Ascending aorta (tissue), 2 donors: ENCODE measurements at regions of chr11 and their contacts with region 1.

Region 1: GRCh38 chr11:12673924-12674570 is at the start of gene TEAD1:
- DNase-seq: peak; percentile 65 to 98
- H3K4me3 ChIP-seq: peak within 1 kb of the TSS; percentile 85 to 97
- H3K27ac ChIP-seq: peak within 1 kb of the TSS; percentile 86 to 99
- H3K4me1 ChIP-seq: peaks cover 0 to 8% of the 10 kb centered on the region in 2 donors
- H3K27me3 ChIP-seq: no peaks in the 10 kb centered on the region
- CTCF ChIP-seq: no peak
- total RNA-seq, gene TEAD1: 112 TPM

Region 2: DNA sequence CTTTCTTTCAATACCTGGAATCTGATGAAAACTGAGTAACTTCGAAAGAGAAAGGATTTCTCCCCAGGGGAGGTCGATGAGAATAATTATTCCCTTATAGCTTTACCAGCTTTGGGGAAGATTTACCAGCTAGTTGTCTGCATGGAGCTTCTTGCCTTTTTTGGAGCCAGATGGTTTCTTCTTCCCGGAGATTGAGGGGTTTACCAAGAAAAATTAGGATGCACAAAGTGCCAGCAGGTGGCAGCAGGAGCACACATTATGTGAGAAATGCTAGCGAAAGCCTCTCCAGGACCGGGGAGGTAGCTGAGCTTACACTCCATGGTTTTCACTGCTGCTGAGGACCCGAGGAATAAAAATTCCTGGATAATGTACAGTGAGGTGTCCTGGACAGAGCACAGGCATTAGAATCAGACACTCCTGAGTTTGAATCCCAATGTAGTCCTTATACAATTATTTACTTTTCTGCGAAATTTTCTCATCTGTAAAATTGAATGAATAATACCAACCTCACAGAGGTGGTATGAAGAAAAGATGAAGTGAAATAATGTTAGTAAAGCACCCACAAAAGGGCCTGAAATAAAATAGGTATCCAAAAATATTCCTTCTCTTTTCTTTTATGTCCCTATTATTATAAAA is 342.7 kb before region 1 on chr11:
- intact Hi-C with region 1: loop called (anchors 5 kb)
- DNase-seq: peak in 1 of 2 donors; percentile 88
- H3K4me3 ChIP-seq: no peak overlapping the region
- H3K27ac ChIP-seq: no peak overlapping the region
- H3K4me1 ChIP-seq: peaks cover 0 to 3% of the 10 kb centered on the region in 2 donors
- H3K27me3 ChIP-seq: no peaks in the 10 kb centered on the region
- CTCF ChIP-seq: peak; percentile 63 to 78 (median 74)

Region 3: GRCh38 chr11:12377824-12378593 is 296.0 kb before region 1 on chr11:
- intact Hi-C with region 1: loop called (anchors 5 kb)
- DNase-seq: peak in 1 of 2 donors; percentile 91
- H3K4me3 ChIP-seq: peak overlapping the region; percentile 88
- H3K27ac ChIP-seq: peak overlapping the region; percentile 97
- H3K4me1 ChIP-seq: peaks cover 0 to 21% of the 10 kb centered on the region in 2 donors
- H3K27me3 ChIP-seq: no peaks in the 10 kb centered on the region
- CTCF ChIP-seq: peak in 2 of 3 experiments; percentile 5 to 18

Region 4: GRCh38 chr11:12411806-12412727 is 262.0 kb before region 1 on chr11:
- intact Hi-C with region 1: loop called (anchors 5 kb)
- DNase-seq: peak in 1 of 2 donors; percentile 89
- H3K4me3 ChIP-seq: no peak overlapping the region
- H3K27ac ChIP-seq: peak overlapping the region; percentile 85
- H3K4me1 ChIP-seq: peaks cover 12 to 41% of the 10 kb centered on the region in 2 donors
- H3K27me3 ChIP-seq: no peaks in the 10 kb centered on the region
- CTCF ChIP-seq: peak; percentile 69 to 75 (median 69)

Region 5: GRCh38 chr11:12693479-12694181 is 19.6 kb after region 1 on chr11:
- intact Hi-C with region 1: loop called (anchors 1 kb)
- DNase-seq: peak in 1 of 2 donors; percentile 86
- H3K4me3 ChIP-seq: peak overlapping the region; percentile 31 to 47
- H3K27ac ChIP-seq: peak overlapping the region; percentile 93 to 94
- H3K4me1 ChIP-seq: peaks cover 9 to 43% of the 10 kb centered on the region in 2 donors
- H3K27me3 ChIP-seq: no peaks in the 10 kb centered on the region
- CTCF ChIP-seq: no peak

Region 6: GRCh38 chr11:12769834-12770345 is 95.8 kb after region 1 on chr11:
- intact Hi-C with region 1: no loop called
- DNase-seq: no peak
- H3K4me3 ChIP-seq: no peak overlapping the region
- H3K27ac ChIP-seq: no peak overlapping the region
- H3K4me1 ChIP-seq: peaks cover 0 to 9% of the 10 kb centered on the region in 2 donors
- H3K27me3 ChIP-seq: no peaks in the 10 kb centered on the region
- CTCF ChIP-seq: no peak

Region 7: DNA sequence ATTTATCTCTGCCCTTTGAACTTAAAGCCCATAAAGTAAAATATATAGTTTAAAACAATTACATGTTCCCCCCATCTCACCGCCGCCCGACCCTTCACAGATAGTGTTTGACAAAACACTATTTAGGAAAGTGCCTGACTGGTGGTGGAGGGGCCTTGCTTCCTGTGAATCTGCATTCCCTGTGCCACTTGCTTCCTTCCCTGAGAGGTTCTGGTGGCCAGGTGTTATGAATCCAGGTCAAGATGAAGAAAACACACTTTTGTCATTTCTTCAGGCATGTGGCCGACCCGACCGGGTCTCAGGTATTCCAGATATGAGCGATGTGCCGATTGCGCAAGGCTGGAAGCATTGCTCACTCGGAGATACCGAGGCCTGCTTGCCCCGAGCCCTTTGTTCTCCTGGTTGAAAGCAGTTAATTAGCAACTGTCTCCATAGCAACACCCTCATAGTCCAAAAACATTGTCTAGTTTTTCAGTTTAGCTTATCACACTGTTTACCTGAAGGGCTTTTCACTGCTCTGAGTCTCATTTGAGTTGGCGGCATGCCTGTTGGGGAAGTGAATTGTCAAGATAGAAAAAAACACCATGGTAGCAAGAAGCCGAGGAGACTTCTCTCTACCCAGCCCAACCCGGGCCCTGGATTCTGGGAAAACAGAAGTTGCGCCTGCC is 128.5 kb after region 1 on chr11:
- intact Hi-C with region 1: no loop called
- DNase-seq: no peak
- H3K4me3 ChIP-seq: no peak overlapping the region
- H3K27ac ChIP-seq: peak overlapping the region in 1 of 2 donors; percentile 23
- H3K4me1 ChIP-seq: peaks cover 13 to 24% of the 10 kb centered on the region in 2 donors
- H3K27me3 ChIP-seq: no peaks in the 10 kb centered on the region
- CTCF ChIP-seq: no peak

Region 8: DNA sequence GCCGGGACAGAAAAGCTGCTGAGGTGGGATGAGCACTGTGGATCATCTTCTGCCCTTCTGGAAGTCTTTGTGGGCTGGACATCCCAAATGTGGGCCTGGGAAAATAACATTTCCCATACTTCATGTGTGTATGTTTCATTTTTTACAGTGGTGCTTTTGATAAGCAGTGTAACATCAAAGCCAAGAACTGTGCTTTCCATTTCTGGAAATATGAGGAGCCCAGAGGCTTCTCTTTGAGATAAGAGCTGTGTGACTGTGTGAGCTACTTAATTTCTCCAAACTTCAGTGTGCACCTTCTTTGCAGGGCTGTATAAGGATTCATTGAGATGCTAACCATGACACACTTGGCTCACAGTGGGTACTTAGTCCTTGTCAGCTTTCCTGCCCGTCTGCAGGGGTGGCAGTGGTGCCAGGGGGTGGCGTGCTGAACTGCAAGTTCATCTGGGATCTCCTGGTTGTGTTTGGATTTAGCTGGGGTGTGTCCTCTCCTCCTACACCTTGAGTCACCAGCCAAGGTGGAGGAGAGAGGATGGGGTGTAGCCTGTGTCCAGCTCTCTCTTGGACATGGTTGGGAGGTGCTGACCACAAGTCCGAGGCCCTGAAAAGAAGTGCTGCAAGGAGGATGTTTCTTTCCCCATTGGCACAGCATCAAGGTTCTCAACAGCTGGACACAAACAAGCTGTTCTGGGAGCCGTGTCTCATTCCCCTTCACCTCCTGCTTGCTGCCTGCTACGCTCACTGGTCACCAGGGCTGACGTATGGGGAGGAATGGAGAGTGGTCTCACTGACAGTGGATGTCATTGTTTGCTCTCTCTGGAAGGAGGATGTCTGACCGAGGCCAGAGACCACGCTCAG is 139.6 kb after region 1 on chr11:
- intact Hi-C with region 1: loop called (anchors 1 kb)
- DNase-seq: no peak
- H3K4me3 ChIP-seq: no peak overlapping the region
- H3K27ac ChIP-seq: peak overlapping the region in 1 of 2 donors; percentile 3
- H3K4me1 ChIP-seq: peaks cover 0 to 13% of the 10 kb centered on the region in 2 donors
- H3K27me3 ChIP-seq: no peaks in the 10 kb centered on the region
- CTCF ChIP-seq: no peak

Region 9: GRCh38 chr11:12888525-12889158 is 214.6 kb after region 1 on chr11:
- intact Hi-C with region 1: loop called (anchors 1 kb)
- DNase-seq: peak; percentile 53 to 94
- H3K4me3 ChIP-seq: peak overlapping the region in 1 of 2 donors; percentile 7
- H3K27ac ChIP-seq: peak overlapping the region; percentile 81 to 82
- H3K4me1 ChIP-seq: peaks cover 8 to 25% of the 10 kb centered on the region in 2 donors
- H3K27me3 ChIP-seq: no peaks in the 10 kb centered on the region
- CTCF ChIP-seq: peak; percentile 69 to 78 (median 75)